H1 (cell line): ENCODE measurements at regions of chr16 and their contacts with region 1.

Region 1: GRCh38 chr16:4271176-4272066 is 1.4 kb downstream of the TFAP4 start:
- DNase-seq: peak in 1 of 2 experiments; percentile 91
- H3K4me3 ChIP-seq: peak overlapping the region; percentile 68 to 97 (median 84)
- H3K27ac ChIP-seq: peak overlapping the region; percentile 96
- H3K4me1 ChIP-seq: peaks cover 3 to 11% (median 8%) of the 10 kb centered on the region in 4 experiments
- H3K27me3 ChIP-seq: no peaks in the 10 kb centered on the region
- CTCF ChIP-seq: peak in 2 of 3 experiments; percentile 7 to 38; a peak in 3 of 4 replicates
- EP300 ChIP-seq: no peak
- POLR2A ChIP-seq: peak in 1 of 2 experiments; percentile 88
- RAD21 ChIP-seq: no peak; a peak in 1 of 4 replicates

Region 2: DNA sequence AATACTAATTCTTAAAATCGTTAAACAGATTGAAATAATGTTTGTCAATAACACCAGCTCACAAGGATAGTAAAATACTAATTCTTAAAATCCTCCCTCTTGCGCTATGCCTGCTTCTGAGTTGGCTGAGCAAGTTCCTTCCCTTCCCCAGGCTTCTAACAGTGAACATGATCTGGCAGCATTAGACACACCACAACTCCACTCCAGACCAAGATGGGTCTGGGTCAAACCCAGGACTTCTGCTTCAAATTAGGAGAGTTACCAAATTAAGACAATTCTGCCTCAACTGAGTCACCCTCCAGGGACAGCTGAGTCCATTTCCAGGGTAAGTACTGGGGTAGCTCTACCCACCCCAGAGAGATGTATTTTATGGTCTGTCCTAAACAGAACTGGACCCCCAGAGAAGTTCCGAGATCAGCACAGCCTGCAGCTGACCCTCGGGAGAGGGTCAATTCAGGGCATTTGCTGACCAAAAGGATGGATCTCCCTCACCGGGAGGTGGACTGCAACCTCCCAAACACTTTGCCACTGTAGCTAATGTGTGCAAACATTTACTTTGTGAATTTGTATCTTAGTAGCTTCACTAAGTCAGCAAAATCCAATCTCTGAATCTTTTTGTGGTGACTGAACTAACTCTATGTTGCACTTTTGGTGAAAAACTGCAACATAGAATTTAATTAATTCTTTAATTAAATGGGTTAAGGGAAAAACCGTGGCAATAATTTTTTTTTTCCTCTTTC is 204.0 kb before region 1 on chr16:
- CTCF ChIA-PET with region 1: no interaction called
- POLR2A ChIA-PET with region 1: no interaction called
- DNase-seq: peak in 1 of 2 experiments; percentile 31
- H3K4me3 ChIP-seq: no peak overlapping the region
- H3K27ac ChIP-seq: no peak overlapping the region
- H3K4me1 ChIP-seq: peaks cover 0 to 3% (median under 1%) of the 10 kb centered on the region in 4 experiments; a peak in 1 of 7 replicates
- H3K27me3 ChIP-seq: no peaks in the 10 kb centered on the region
- CTCF ChIP-seq: no peak
- EP300 ChIP-seq: no peak
- POLR2A ChIP-seq: no peak
- RAD21 ChIP-seq: no peak

Region 3: DNA sequence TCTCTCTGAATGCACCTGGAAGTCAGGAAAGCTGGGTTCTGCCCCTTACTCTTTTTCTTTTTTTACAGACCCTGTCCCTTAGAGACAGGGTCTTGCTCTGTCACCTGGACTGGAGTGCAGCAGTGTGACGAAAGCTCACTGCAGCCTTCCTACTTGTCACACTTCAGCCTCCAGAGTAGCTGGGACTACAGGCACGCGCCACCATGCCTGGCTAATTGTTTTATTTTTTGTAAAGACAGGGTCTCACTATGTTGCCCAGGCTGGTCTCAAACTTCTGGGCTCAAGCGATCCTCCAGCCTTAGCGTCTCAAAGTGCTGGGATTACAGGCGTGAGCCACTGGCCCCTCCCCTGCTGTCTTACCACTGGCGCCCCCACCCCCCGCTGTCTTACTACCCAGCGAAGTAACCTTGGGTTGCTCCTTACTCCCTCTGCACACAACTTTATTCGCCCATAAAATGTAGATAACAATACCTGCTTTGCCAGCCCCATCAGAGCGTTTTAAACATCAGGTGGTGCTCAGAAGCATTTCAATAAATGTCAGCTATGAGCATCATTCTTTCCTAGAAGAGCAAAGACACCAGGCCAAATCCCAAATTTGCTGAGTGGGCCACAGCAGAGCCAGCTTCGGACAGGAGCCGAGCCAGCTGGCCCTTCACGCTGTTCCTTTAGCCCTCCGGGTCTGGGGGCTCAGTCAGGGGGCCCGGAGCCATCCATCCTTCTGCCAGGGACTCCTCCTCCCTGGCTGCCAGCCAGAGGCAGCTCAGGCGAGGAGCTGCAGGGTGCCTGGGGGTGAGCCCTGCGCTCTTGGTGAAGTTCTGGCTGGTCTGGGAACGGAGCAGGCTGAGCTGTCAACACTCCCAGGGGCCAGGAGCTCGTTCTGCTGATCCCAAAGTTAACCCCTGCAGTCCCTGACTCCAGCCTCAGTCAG is 54.0 kb before region 1 on chr16:
- CTCF ChIA-PET with region 1: no interaction called
- POLR2A ChIA-PET with region 1: no interaction called
- DNase-seq: no peak
- H3K4me3 ChIP-seq: peak overlapping the region in 1 of 4 experiments; percentile 8; a peak in 1 of 8 replicates
- H3K27ac ChIP-seq: no peak overlapping the region
- H3K4me1 ChIP-seq: peaks cover 6 to 17% (median 8%) of the 10 kb centered on the region in 4 experiments
- H3K27me3 ChIP-seq: no peaks in the 10 kb centered on the region
- CTCF ChIP-seq: no peak
- EP300 ChIP-seq: no peak
- POLR2A ChIP-seq: no peak
- RAD21 ChIP-seq: no peak

Region 4: GRCh38 chr16:4232541-4233386 is 38.7 kb before region 1 on chr16:
- CTCF ChIA-PET with region 1: no interaction called
- POLR2A ChIA-PET with region 1: no interaction called
- DNase-seq: no peak
- H3K4me3 ChIP-seq: no peak overlapping the region
- H3K27ac ChIP-seq: no peak overlapping the region
- H3K4me1 ChIP-seq: no peaks in the 10 kb centered on the region
- H3K27me3 ChIP-seq: no peaks in the 10 kb centered on the region
- CTCF ChIP-seq: no peak
- EP300 ChIP-seq: no peak
- POLR2A ChIP-seq: no peak
- RAD21 ChIP-seq: no peak

Region 5: GRCh38 chr16:4253394-4254150 is 17.8 kb before region 1 on chr16:
- CTCF ChIA-PET with region 1: interaction called, 9 read pairs
- POLR2A ChIA-PET with region 1: interaction called, 71 read pairs
- DNase-seq: peak; percentile 98
- H3K4me3 ChIP-seq: peak overlapping the region; percentile 41 to 70 (median 58)
- H3K27ac ChIP-seq: no peak overlapping the region; the same call in 1 of the 2 replicates
- H3K4me1 ChIP-seq: peaks cover 0 to 3% (median 0%) of the 10 kb centered on the region in 4 experiments; a peak in 1 of 7 replicates
- H3K27me3 ChIP-seq: no peaks in the 10 kb centered on the region
- CTCF ChIP-seq: no peak
- EP300 ChIP-seq: no peak
- POLR2A ChIP-seq: peak; percentile 53 to 70
- RAD21 ChIP-seq: peak; percentile 87 to 91

Region 6: GRCh38 chr16:4288148-4288921 is 16.9 kb after region 1 on chr16:
- CTCF ChIA-PET with region 1: interaction called, 26 read pairs
- POLR2A ChIA-PET with region 1: interaction called, 403 read pairs
- DNase-seq: peak in 1 of 2 experiments; percentile 98
- H3K4me3 ChIP-seq: peak overlapping the region in 2 of 4 experiments; percentile 2 to 16; a peak in 2 of 8 replicates
- H3K27ac ChIP-seq: peak overlapping the region; percentile 38; the same call in 1 of the 2 replicates
- H3K4me1 ChIP-seq: peaks cover 3 to 17% (median 8%) of the 10 kb centered on the region in 4 experiments
- H3K27me3 ChIP-seq: no peaks in the 10 kb centered on the region
- CTCF ChIP-seq: peak; percentile 94 to 98 (median 98)
- EP300 ChIP-seq: no peak
- POLR2A ChIP-seq: no peak
- RAD21 ChIP-seq: peak; percentile 84 to 93

Region 7: GRCh38 chr16:4298761-4299522 is 27.5 kb after region 1 on chr16:
- CTCF ChIA-PET with region 1: interaction called, 22 read pairs
- POLR2A ChIA-PET with region 1: interaction called, 403 read pairs
- DNase-seq: peak in 1 of 2 experiments; percentile 66
- H3K4me3 ChIP-seq: no peak overlapping the region
- H3K27ac ChIP-seq: no peak overlapping the region; the same call in 1 of the 2 replicates
- H3K4me1 ChIP-seq: peaks cover 4 to 13% (median 5%) of the 10 kb centered on the region in 4 experiments
- H3K27me3 ChIP-seq: no peaks in the 10 kb centered on the region
- CTCF ChIP-seq: no peak
- EP300 ChIP-seq: no peak
- POLR2A ChIP-seq: no peak
- RAD21 ChIP-seq: no peak

Region 8: DNA sequence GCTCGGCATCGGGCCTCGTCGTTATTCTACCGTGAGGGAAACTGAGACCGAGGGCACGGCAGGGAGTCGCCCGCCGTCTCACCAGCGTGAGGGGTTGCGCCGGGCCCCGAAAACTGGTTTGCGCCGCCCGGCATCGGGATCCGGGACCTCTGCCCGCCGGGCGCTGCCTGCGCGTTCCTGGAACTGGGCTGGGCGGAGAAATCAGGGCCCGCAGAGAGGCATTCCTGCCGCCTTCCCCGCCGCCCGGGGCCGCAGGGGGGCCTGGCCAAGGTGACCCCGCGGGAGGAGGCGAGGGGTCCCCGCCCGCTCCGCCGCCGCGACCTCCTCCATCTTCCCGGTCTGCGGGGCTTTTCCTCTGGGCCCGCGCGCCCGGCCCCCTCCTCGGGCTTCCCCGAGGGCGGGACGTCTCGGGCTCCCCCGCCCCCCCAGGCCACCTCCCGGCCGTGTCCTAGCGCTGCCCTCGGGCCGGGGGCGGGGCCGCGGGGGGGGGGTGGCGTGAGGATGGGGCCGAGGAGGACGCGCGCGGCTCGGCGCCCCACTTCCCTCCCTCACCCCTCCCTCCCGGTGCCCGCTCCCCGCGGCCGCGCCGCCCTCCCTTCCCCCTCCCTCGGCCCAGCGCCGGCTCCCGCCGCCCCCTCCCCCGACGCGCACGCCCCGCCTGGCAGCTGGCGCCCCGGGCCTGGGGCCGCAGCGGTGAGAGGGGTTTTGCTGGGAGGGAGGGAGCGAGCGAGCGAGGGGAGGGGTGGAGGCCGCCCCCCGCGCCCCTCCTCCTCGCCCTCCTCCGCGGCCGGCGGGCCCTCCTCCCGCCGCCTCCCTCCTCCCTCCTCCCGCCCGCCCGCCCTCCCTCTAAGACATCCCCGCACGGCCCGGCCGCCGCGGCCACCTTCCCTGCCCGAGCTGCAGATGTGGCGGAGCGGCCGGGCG is 44.0 kb after region 1 on chr16 and contains the start of gene GLIS2:
- CTCF ChIA-PET with region 1: interaction called, 12 read pairs
- POLR2A ChIA-PET with region 1: interaction called, 403 read pairs
- DNase-seq: peak in 1 of 2 experiments; percentile 73
- H3K4me3 ChIP-seq: peak within 1 kb of the TSS; percentile 63 to 92 (median 68)
- H3K27ac ChIP-seq: peak within 1 kb of the TSS; percentile 39; the same call in 1 of the 2 replicates
- H3K4me1 ChIP-seq: peaks cover 0 to 39% (median 33%) of the 10 kb centered on the region in 4 experiments; a peak in 6 of 7 replicates
- H3K27me3 ChIP-seq: peaks cover 0 to 15% (median 11%) of the 10 kb centered on the region in 4 experiments; a peak in 6 of 7 replicates
- CTCF ChIP-seq: no peak
- EP300 ChIP-seq: no peak
- POLR2A ChIP-seq: no peak; a peak in 1 of 3 replicates
- RAD21 ChIP-seq: no peak
- total RNA-seq, gene GLIS2: 17.4 and 18.6 TPM in 2 replicates

Region 9: DNA sequence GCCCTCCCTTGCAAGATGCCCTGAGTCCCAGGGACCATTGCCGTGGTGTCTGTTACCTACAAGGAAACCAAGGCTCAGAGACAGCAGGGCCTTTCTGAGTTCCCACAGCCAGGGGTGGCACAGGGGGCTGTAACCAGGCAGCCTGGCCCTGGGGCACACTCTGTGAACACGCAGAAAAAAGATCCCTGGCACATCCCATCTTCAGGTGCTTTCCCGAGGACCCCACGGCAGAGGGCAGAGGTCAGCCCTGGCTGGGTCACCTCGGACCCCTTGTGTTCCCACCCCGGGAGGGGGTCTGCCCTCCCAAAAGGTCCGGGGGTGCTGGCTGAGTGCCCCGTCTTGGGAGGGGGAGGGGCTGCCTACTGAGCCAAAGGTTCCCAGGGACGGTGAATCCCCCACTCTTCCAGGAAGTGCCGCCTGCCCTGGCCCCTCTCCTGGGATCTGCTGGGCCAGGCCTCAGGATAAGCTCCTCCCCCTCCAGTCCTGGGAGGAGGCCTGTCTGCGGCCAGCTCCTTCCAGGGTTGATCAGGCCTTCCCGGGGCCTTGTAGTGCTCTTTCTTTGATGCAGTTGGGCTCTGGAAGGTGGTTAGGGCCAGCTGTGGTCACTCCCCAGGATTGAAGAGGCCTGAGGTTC is 52.5 kb after region 1 on chr16:
- CTCF ChIA-PET with region 1: interaction called, 34 read pairs
- POLR2A ChIA-PET with region 1: interaction called, 69 read pairs
- DNase-seq: peak in 1 of 2 experiments; percentile 77
- H3K4me3 ChIP-seq: peak overlapping the region in 1 of 4 experiments; percentile 11; a peak in 1 of 8 replicates
- H3K27ac ChIP-seq: no peak overlapping the region
- H3K4me1 ChIP-seq: peaks cover 5 to 38% (median 31%) of the 10 kb centered on the region in 4 experiments
- H3K27me3 ChIP-seq: no peaks in the 10 kb centered on the region
- CTCF ChIP-seq: no peak
- EP300 ChIP-seq: no peak
- POLR2A ChIP-seq: no peak
- RAD21 ChIP-seq: no peak

Region 10: GRCh38 chr16:4330277-4330874 is 59.0 kb after region 1 on chr16:
- CTCF ChIA-PET with region 1: interaction called, 34 read pairs
- POLR2A ChIA-PET with region 1: interaction called, 69 read pairs
- DNase-seq: peak in 1 of 2 experiments; percentile 91
- H3K4me3 ChIP-seq: no peak overlapping the region
- H3K27ac ChIP-seq: no peak overlapping the region
- H3K4me1 ChIP-seq: peaks cover 5 to 14% (median 10%) of the 10 kb centered on the region in 4 experiments
- H3K27me3 ChIP-seq: no peaks in the 10 kb centered on the region
- CTCF ChIP-seq: peak; percentile 84 to 98 (median 97)
- EP300 ChIP-seq: no peak
- POLR2A ChIP-seq: no peak
- RAD21 ChIP-seq: peak; percentile 86 to 94

Region 11: DNA sequence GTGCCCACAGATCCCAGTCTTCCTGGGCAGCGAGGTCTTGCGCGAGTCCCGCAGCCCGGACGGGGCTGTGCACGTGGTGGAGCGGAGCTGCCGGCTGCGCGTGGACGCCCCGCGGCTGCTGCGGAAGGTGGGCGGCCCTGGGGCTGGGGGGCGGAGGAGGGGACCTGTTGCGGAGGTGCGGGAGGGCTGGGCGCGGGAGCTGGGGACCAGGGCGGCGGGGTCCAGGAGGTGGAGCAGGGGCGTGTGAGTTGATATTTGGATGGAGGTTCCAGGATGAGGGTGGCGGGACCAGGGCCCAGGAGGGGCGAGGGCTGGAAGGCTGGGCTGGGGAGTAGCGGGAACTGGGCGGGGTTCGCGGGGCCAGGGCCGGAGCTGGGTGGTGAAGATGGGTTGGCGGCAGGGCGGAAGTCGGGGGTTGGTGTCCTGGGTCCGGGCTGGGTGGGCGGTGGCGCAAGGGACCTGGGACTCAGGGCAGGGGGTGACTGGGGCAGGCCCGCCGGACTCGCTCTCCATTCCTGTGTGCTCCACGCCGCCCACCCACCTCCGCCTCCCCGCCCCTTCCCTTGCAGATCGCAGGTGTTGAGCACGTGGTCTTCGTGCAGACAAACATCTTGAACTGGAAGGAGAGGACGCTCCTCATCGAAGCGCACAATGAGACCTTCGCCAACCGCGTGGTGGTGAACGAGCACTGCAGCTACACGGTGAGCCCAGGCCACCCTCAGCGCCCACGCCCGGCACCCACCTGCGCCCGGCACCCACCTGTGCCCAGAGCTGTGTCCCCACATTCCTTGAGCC is 716.4 kb after region 1 on chr16:
- CTCF ChIA-PET with region 1: no interaction called
- POLR2A ChIA-PET with region 1: no interaction called
- DNase-seq: peak in 1 of 2 experiments; percentile 81
- H3K4me3 ChIP-seq: peak overlapping the region; percentile 14 to 60 (median 24); a peak in 6 of 8 replicates
- H3K27ac ChIP-seq: no peak overlapping the region
- H3K4me1 ChIP-seq: peaks cover 0 to 3% (median 1%) of the 10 kb centered on the region in 4 experiments; a peak in 3 of 7 replicates
- H3K27me3 ChIP-seq: peaks cover 4 to 26% (median 20%) of the 10 kb centered on the region in 4 experiments
- CTCF ChIP-seq: no peak
- EP300 ChIP-seq: no peak
- POLR2A ChIP-seq: no peak
- RAD21 ChIP-seq: no peak